ENCODE measurements at regions of chr17 and their contacts with region 1.

Region 1: GRCh38 chr17:57130761-57131461 is 45.9 kb downstream of the AKAP1 start:
- DNase-seq: peak; percentile 96
- ATAC-seq: peak; percentile 95
- H3K4me3 ChIP-seq: peak overlapping the region; percentile 42
- H3K27ac ChIP-seq: no peak overlapping the region
- H3K4me1 ChIP-seq: peaks cover 7% of the 10 kb centered on the region
- H3K27me3 ChIP-seq: no peaks in the 10 kb centered on the region
- CTCF ChIP-seq: peak; percentile 83

Region 2: GRCh38 chr17:57211543-57211942 is 80.6 kb after region 1 on chr17:
- CTCF ChIA-PET with region 1: no interaction called
- POLR2A ChIA-PET with region 1: no interaction called
- intact Hi-C with region 1: loop called (anchors 5 kb)
- DNase-seq: peak; percentile 90
- ATAC-seq: peak; percentile 76
- H3K4me3 ChIP-seq: peak overlapping the region; percentile 10; the same call in 1 of the 2 replicates
- H3K27ac ChIP-seq: peak overlapping the region; percentile 88
- H3K4me1 ChIP-seq: peaks cover 48% of the 10 kb centered on the region
- H3K27me3 ChIP-seq: no peaks in the 10 kb centered on the region
- CTCF ChIP-seq: peak; percentile 38; the same call in 1 of the 2 replicates

Region 3: DNA sequence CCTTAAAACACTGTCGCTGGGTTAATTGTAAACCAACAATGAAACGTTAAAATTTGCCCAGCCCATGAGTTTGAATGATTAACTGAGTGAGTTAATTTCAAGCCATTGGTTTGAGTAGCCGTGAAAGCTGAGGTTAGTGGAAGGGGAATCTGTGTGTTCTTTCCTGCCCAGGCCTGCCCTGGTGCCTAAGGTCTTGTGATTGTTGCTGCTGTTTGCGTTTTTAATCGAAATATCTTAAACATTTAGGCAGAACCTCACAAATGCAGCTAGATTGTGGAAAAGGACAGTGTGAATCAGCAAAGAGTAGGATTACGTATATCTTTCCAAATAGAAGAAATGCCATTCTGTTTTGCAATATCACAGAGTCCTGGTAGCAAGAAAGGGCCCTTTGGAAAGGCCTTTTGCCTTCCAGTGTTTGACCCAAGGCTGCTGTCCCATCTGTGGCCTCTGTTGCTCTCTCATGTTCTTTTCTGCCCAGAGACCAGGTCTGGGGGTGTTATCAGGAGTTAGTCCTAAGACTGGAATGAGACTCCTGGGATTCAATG is 239.2 kb after region 1 on chr17:
- CTCF ChIA-PET with region 1: no interaction called
- POLR2A ChIA-PET with region 1: no interaction called
- intact Hi-C with region 1: no loop called
- DNase-seq: peak; percentile 73
- ATAC-seq: peak; percentile 42
- H3K4me3 ChIP-seq: no peak overlapping the region
- H3K27ac ChIP-seq: peak overlapping the region; percentile 61
- H3K4me1 ChIP-seq: peaks cover 56% of the 10 kb centered on the region
- H3K27me3 ChIP-seq: no peaks in the 10 kb centered on the region
- CTCF ChIP-seq: no peak

Region 4: GRCh38 chr17:57518587-57519581 is 388.0 kb after region 1 on chr17:
- CTCF ChIA-PET with region 1: interaction called, 5 read pairs
- POLR2A ChIA-PET with region 1: no interaction called
- intact Hi-C with region 1: loop called (anchors 1 kb)
- DNase-seq: peak; percentile 74
- ATAC-seq: peak; percentile 45
- H3K4me3 ChIP-seq: no peak overlapping the region
- H3K27ac ChIP-seq: peak overlapping the region; percentile 31
- H3K4me1 ChIP-seq: peaks cover 32% of the 10 kb centered on the region
- H3K27me3 ChIP-seq: no peaks in the 10 kb centered on the region
- CTCF ChIP-seq: no peak

Region 5: GRCh38 chr17:57671667-57672632 is 541.0 kb after region 1 on chr17:
- CTCF ChIA-PET with region 1: interaction called, 5 read pairs
- POLR2A ChIA-PET with region 1: no interaction called
- intact Hi-C with region 1: loop called (anchors 1 kb)
- DNase-seq: peak; percentile 81
- ATAC-seq: peak; percentile 99
- H3K4me3 ChIP-seq: no peak overlapping the region
- H3K27ac ChIP-seq: no peak overlapping the region
- H3K4me1 ChIP-seq: peaks cover 4% of the 10 kb centered on the region; the same call in 1 of the 2 replicates
- H3K27me3 ChIP-seq: no peaks in the 10 kb centered on the region
- CTCF ChIP-seq: peak; percentile 100

Region 6: GRCh38 chr17:57747221-57748017 is 616.5 kb after region 1 on chr17:
- CTCF ChIA-PET with region 1: no interaction called
- POLR2A ChIA-PET with region 1: no interaction called
- intact Hi-C with region 1: loop called (anchors 1 kb)
- DNase-seq: peak; percentile 83
- ATAC-seq: peak; percentile 95
- H3K4me3 ChIP-seq: no peak overlapping the region
- H3K27ac ChIP-seq: no peak overlapping the region
- H3K4me1 ChIP-seq: no peaks in the 10 kb centered on the region
- H3K27me3 ChIP-seq: peaks cover 40% of the 10 kb centered on the region
- CTCF ChIP-seq: peak; percentile 96

Region 7: GRCh38 chr17:58112970-58113631 is 982.2 kb after region 1 on chr17:
- CTCF ChIA-PET with region 1: no interaction called
- POLR2A ChIA-PET with region 1: no interaction called
- intact Hi-C with region 1: loop called (anchors 5 kb)
- DNase-seq: peak; percentile 93
- ATAC-seq: peak; percentile 86
- H3K4me3 ChIP-seq: no peak overlapping the region
- H3K27ac ChIP-seq: no peak overlapping the region
- H3K4me1 ChIP-seq: no peaks in the 10 kb centered on the region
- H3K27me3 ChIP-seq: no peaks in the 10 kb centered on the region; the same call in 1 of the 2 replicates
- CTCF ChIP-seq: peak; percentile 98

Measured in PC-3 (cell line).